ENCODE measurements at regions of chr11 and their contacts with region 1.

Region 1: DNA sequence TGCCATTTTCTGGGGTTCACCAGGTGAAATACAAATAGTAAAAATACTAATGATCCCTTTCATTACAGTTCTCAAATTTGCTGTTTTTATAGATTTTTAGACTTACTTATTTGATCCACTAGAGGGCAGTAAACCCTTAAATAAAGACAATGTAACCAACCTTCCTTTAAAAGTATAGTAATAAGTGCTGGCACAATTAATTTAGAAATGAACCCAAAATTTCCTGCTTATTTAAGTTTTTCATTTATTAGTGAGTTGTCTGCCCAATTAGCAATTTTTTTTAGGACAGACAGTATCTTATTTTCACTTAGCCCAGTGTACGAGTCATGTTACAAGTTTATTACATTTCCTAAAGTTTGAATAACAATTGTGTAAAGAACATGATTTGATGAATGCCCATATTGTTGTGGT is 4.7 kb downstream of the DDIAS start:
- DNase-seq: peak in 4 of 5 donors; percentile 45 to 51 (median 48)
- H3K4me3 ChIP-seq: no peak overlapping the region
- H3K4me3 Mint-ChIP-seq: no peak overlapping the region
- H3K27ac ChIP-seq: no peak overlapping the region
- H3K27ac Mint-ChIP-seq: no peak overlapping the region
- H3K4me1 ChIP-seq: peaks cover 18% of the 10 kb centered on the region
- H3K4me1 Mint-ChIP-seq: peaks cover 11 to 22% (median 16%) of the 10 kb centered on the region in 4 donors
- H3K27me3 ChIP-seq: no peaks in the 10 kb centered on the region
- H3K27me3 Mint-ChIP-seq: no peaks in the 10 kb centered on the region

Region 2: GRCh38 chr11:82859746-82860145 is 46.5 kb before region 1 on chr11:
- CTCF ChIA-PET with region 1: no interaction called
- POLR2A ChIA-PET with region 1: no interaction called
- intact Hi-C with region 1: no loop called
- DNase-seq: no peak
- H3K4me3 ChIP-seq: no peak overlapping the region
- H3K4me3 Mint-ChIP-seq: no peak overlapping the region
- H3K27ac ChIP-seq: no peak overlapping the region
- H3K27ac Mint-ChIP-seq: no peak overlapping the region
- H3K4me1 ChIP-seq: no peaks in the 10 kb centered on the region
- H3K4me1 Mint-ChIP-seq: peaks cover 0 to 3% (median 0%) of the 10 kb centered on the region in 4 donors
- H3K27me3 ChIP-seq: no peaks in the 10 kb centered on the region
- H3K27me3 Mint-ChIP-seq: no peaks in the 10 kb centered on the region

Region 3: GRCh38 chr11:82927254-82927880 is 21.1 kb after region 1 on chr11:
- CTCF ChIA-PET with region 1: interaction called, 11 read pairs
- POLR2A ChIA-PET with region 1: interaction called, 5 read pairs
- intact Hi-C with region 1: loop called (anchors 1 kb)
- DNase-seq: peak; percentile 50 to 71 (median 65)
- H3K4me3 ChIP-seq: no peak overlapping the region
- H3K4me3 Mint-ChIP-seq: no peak overlapping the region
- H3K27ac ChIP-seq: no peak overlapping the region
- H3K27ac Mint-ChIP-seq: peak overlapping the region in 2 of 7 donors; percentile 2 to 57
- H3K4me1 ChIP-seq: peaks cover 8% of the 10 kb centered on the region
- H3K4me1 Mint-ChIP-seq: peaks cover 16 to 22% (median 18%) of the 10 kb centered on the region in 4 donors
- H3K27me3 ChIP-seq: no peaks in the 10 kb centered on the region
- H3K27me3 Mint-ChIP-seq: no peaks in the 10 kb centered on the region

Region 4: DNA sequence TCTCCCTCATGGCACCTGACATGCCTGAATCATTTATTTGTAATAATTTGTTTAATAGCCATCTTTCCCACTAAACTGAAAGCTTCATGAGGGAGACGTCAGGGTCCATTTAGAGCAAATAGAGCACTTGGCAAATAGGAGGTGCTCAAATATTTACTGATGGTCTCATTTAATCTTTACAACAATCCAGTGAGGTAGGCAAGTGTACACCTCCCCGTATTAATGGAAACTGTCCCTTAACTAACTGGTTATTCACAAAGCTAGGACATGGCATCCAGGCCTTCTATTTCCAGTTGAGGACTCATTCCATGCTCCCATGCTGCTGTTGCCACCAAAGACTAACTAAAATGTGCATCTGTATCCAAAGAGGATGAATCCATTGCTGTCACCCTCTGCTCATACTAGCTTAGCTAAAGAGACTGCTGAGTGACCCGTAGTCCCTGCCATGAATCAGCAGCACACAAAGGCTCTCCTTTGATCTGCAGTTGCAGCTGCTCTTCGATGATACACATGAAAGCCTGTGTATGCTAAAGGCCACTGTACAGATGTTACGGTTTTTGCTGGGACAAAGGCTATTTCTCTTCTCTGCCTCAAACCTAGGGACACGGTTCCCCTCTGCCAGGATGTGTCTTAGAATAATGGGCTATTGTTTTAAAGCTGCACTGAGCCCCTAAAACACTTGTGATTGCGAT is 82.8 kb after region 1 on chr11:
- CTCF ChIA-PET with region 1: interaction called, 12 read pairs
- POLR2A ChIA-PET with region 1: interaction called, 3 read pairs
- intact Hi-C with region 1: loop called (anchors 1 kb)
- DNase-seq: no peak
- H3K4me3 ChIP-seq: no peak overlapping the region
- H3K4me3 Mint-ChIP-seq: no peak overlapping the region
- H3K27ac ChIP-seq: no peak overlapping the region
- H3K27ac Mint-ChIP-seq: peak overlapping the region in 2 of 7 donors; percentile 14 to 21
- H3K4me1 ChIP-seq: no peaks in the 10 kb centered on the region
- H3K4me1 Mint-ChIP-seq: peaks cover 0 to 6% (median under 1%) of the 10 kb centered on the region in 4 donors
- H3K27me3 ChIP-seq: no peaks in the 10 kb centered on the region
- H3K27me3 Mint-ChIP-seq: no peaks in the 10 kb centered on the region

Region 5: GRCh38 chr11:83087035-83087434 is 180.8 kb after region 1 on chr11:
- CTCF ChIA-PET with region 1: interaction called, 3 read pairs
- POLR2A ChIA-PET with region 1: no interaction called
- intact Hi-C with region 1: loop called (anchors 5 kb)
- DNase-seq: no peak
- H3K4me3 ChIP-seq: no peak overlapping the region
- H3K4me3 Mint-ChIP-seq: no peak overlapping the region
- H3K27ac ChIP-seq: no peak overlapping the region
- H3K27ac Mint-ChIP-seq: peak overlapping the region in 2 of 7 donors; percentile 32 to 58
- H3K4me1 ChIP-seq: no peaks in the 10 kb centered on the region
- H3K4me1 Mint-ChIP-seq: peaks cover 0 to 13% (median 11%) of the 10 kb centered on the region in 4 donors
- H3K27me3 ChIP-seq: no peaks in the 10 kb centered on the region
- H3K27me3 Mint-ChIP-seq: no peaks in the 10 kb centered on the region

Region 6: DNA sequence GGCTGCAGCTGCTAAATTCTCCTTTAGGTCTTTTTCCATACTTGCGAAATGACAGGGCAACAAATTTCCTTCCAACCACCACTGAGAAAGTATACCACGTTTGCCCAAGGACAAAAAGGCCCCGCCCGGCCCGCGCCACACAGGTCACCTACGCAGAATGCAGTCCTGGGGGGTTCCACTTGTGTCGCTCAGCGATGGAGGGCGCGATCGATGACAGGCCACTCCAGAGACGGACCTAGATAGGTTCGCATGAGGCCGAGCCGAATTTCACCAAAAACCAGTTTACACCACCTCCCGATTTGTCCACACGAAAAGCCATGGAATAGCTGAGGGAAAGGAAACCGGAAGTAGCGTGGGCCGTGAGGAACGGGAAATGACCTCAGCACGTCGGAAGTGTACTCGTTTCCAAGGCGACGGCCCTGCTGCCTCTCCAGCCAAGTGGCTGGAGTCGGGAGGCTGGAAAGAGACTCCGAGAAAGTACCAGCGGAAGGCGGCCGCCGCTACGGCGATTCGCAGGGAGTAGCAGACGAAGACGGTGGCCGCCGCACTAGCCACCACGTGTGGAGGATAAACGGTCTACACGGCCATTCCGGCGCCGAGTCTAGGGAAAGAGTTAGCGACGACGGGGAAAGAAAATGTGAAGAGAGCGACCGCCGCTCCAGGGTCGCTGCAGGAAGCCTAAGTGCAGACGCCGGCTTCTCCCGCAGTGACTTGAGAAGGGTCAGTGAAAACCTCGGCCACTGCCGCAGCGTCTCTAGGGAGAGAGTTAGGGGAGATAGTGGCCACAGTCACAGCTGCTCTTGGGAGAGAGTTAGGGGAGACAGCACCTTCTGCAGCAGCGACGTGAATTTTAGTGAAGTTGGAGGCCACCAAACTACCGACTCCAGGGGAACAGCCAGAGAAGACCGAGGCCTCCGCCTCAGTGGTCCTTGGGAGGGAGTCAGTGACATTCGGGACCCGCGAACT is 287.3 kb after region 1 on chr11 and contains the start of gene ANKRD42:
- CTCF ChIA-PET with region 1: interaction called, 3 read pairs
- POLR2A ChIA-PET with region 1: interaction called, 31 read pairs
- intact Hi-C with region 1: loop called (anchors 1 kb)
- DNase-seq: peak; percentile 88 to 92 (median 90)
- H3K4me3 ChIP-seq: peak within 1 kb of the TSS; percentile 90 to 99
- H3K4me3 Mint-ChIP-seq: peak within 1 kb of the TSS; percentile 98 to 100 (median 99)
- H3K27ac ChIP-seq: peak within 1 kb of the TSS; percentile 99
- H3K27ac Mint-ChIP-seq: peak within 1 kb of the TSS; percentile 99 to 100 (median 100)
- H3K4me1 ChIP-seq: peaks cover 39% of the 10 kb centered on the region
- H3K4me1 Mint-ChIP-seq: peaks cover 35 to 53% (median 41%) of the 10 kb centered on the region in 4 donors
- H3K27me3 ChIP-seq: no peaks in the 10 kb centered on the region
- H3K27me3 Mint-ChIP-seq: no peaks in the 10 kb centered on the region
- total RNA-seq, gene ANKRD42: 8.9 to 12.4 TPM

Region 7: GRCh38 chr11:83249972-83250593 is 343.8 kb after region 1 on chr11:
- CTCF ChIA-PET with region 1: interaction called, 30 read pairs
- POLR2A ChIA-PET with region 1: interaction called, 3 read pairs
- intact Hi-C with region 1: loop called (anchors 1 kb)
- DNase-seq: peak in 4 of 5 donors; percentile 28 to 43 (median 38)
- H3K4me3 ChIP-seq: no peak overlapping the region
- H3K4me3 Mint-ChIP-seq: no peak overlapping the region
- H3K27ac ChIP-seq: no peak overlapping the region
- H3K27ac Mint-ChIP-seq: no peak overlapping the region
- H3K4me1 ChIP-seq: no peaks in the 10 kb centered on the region
- H3K4me1 Mint-ChIP-seq: peaks cover 0 to 4% (median 2%) of the 10 kb centered on the region in 4 donors
- H3K27me3 ChIP-seq: no peaks in the 10 kb centered on the region
- H3K27me3 Mint-ChIP-seq: no peaks in the 10 kb centered on the region